ENCODE measurements at regions of chr14 and their contacts with region 1.

Region 1: GRCh38 chr14:91286530-91286937 is 42.0 kb upstream of the GPR68 start:
- DNase-seq: peak; percentile 62 to 82 (median 69)
- H3K4me3 ChIP-seq: no peak overlapping the region
- H3K4me3 Mint-ChIP-seq: no peak overlapping the region
- H3K27ac ChIP-seq: no peak overlapping the region
- H3K27ac Mint-ChIP-seq: peak overlapping the region; percentile 3 to 73 (median 54)
- H3K4me1 ChIP-seq: no peaks in the 10 kb centered on the region
- H3K4me1 Mint-ChIP-seq: peaks cover 8 to 12% (median 11%) of the 10 kb centered on the region in 3 donors
- H3K27me3 ChIP-seq: no peaks in the 10 kb centered on the region
- H3K27me3 Mint-ChIP-seq: peaks cover 0 to 2% of the 10 kb centered on the region in 2 donors

Region 2: GRCh38 chr14:91193069-91193468 is 93.5 kb before region 1 on chr14:
- CTCF ChIA-PET with region 1: interaction called, 10 read pairs
- POLR2A ChIA-PET with region 1: no interaction called
- DNase-seq: no peak
- H3K4me3 ChIP-seq: no peak overlapping the region
- H3K4me3 Mint-ChIP-seq: no peak overlapping the region
- H3K27ac ChIP-seq: no peak overlapping the region
- H3K27ac Mint-ChIP-seq: peak overlapping the region in 3 of 8 donors; percentile 3 to 13 (median 4)
- H3K4me1 ChIP-seq: peaks cover 14% of the 10 kb centered on the region
- H3K4me1 Mint-ChIP-seq: peaks cover 20 to 27% (median 23%) of the 10 kb centered on the region in 3 donors
- H3K27me3 ChIP-seq: no peaks in the 10 kb centered on the region
- H3K27me3 Mint-ChIP-seq: no peaks in the 10 kb centered on the region

Region 3: GRCh38 chr14:91228112-91229004 is 58.2 kb before region 1 on chr14:
- CTCF ChIA-PET with region 1: interaction called, 16 read pairs
- POLR2A ChIA-PET with region 1: no interaction called
- DNase-seq: peak; percentile 62 to 91 (median 78)
- H3K4me3 ChIP-seq: peak overlapping the region; percentile 29
- H3K4me3 Mint-ChIP-seq: peak overlapping the region; percentile 16 to 89 (median 85)
- H3K27ac ChIP-seq: peak overlapping the region; percentile 58
- H3K27ac Mint-ChIP-seq: peak overlapping the region; percentile 87 to 99 (median 98)
- H3K4me1 ChIP-seq: peaks cover 97% of the 10 kb centered on the region
- H3K4me1 Mint-ChIP-seq: peaks cover 86 to 100% (median 94%) of the 10 kb centered on the region in 3 donors
- H3K27me3 ChIP-seq: no peaks in the 10 kb centered on the region
- H3K27me3 Mint-ChIP-seq: peaks cover 0 to 1% of the 10 kb centered on the region in 2 donors

Region 4: GRCh38 chr14:91244501-91244901 is 42.0 kb before region 1 on chr14 and contains the start of gene GPR68:
- CTCF ChIA-PET with region 1: interaction called, 24 read pairs
- POLR2A ChIA-PET with region 1: interaction called, 4 read pairs
- DNase-seq: peak in 2 of 5 donors; percentile 29 to 62
- H3K4me3 ChIP-seq: peak within 1 kb of the TSS; percentile 82
- H3K4me3 Mint-ChIP-seq: peak within 1 kb of the TSS; percentile 87 to 95 (median 92)
- H3K27ac ChIP-seq: peak within 1 kb of the TSS; percentile 94
- H3K27ac Mint-ChIP-seq: peak within 1 kb of the TSS; percentile 85 to 100 (median 94)
- H3K4me1 ChIP-seq: peaks cover 80% of the 10 kb centered on the region
- H3K4me1 Mint-ChIP-seq: peaks cover 84 to 97% (median 95%) of the 10 kb centered on the region in 3 donors
- H3K27me3 ChIP-seq: no peaks in the 10 kb centered on the region
- H3K27me3 Mint-ChIP-seq: peaks cover 0 to 5% of the 10 kb centered on the region in 2 donors
- total RNA-seq, gene GPR68: 14.2 to 15.4 TPM

Region 5: GRCh38 chr14:91272341-91273272 is 13.9 kb before region 1 on chr14:
- CTCF ChIA-PET with region 1: interaction called, 12 read pairs
- POLR2A ChIA-PET with region 1: no interaction called
- DNase-seq: no peak
- H3K4me3 ChIP-seq: no peak overlapping the region
- H3K4me3 Mint-ChIP-seq: peak overlapping the region in 1 of 7 donors; percentile 56
- H3K27ac ChIP-seq: no peak overlapping the region
- H3K27ac Mint-ChIP-seq: peak overlapping the region in 4 of 8 donors; percentile 56 to 86 (median 74)
- H3K4me1 ChIP-seq: no peaks in the 10 kb centered on the region
- H3K4me1 Mint-ChIP-seq: peaks cover 11 to 17% (median 15%) of the 10 kb centered on the region in 3 donors
- H3K27me3 ChIP-seq: no peaks in the 10 kb centered on the region
- H3K27me3 Mint-ChIP-seq: peaks cover 0 to 7% of the 10 kb centered on the region in 2 donors

Region 6: DNA sequence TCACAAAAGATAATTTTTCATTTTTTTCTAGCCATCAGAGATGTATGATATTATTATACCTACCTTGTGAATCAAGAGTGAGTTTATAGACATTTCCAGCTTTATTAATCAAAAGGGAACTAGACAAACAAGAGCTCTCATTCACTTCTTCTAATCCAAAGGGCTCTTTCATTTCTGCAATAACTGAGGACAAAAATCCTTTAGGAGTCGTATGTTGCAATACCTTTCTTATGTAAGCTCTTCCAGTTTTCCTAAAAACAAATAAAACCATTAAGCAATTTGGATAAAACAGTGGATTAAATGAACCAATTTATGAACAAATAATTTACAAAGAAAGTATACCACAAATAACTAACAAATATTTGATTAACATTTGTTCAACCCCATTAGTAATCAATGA is 338.2 kb after region 1 on chr14:
- CTCF ChIA-PET with region 1: no interaction called
- POLR2A ChIA-PET with region 1: no interaction called
- DNase-seq: no peak
- H3K4me3 ChIP-seq: no peak overlapping the region
- H3K4me3 Mint-ChIP-seq: no peak overlapping the region
- H3K27ac ChIP-seq: no peak overlapping the region
- H3K27ac Mint-ChIP-seq: no peak overlapping the region
- H3K4me1 ChIP-seq: no peaks in the 10 kb centered on the region
- H3K4me1 Mint-ChIP-seq: no peaks in the 10 kb centered on the region
- H3K27me3 ChIP-seq: no peaks in the 10 kb centered on the region
- H3K27me3 Mint-ChIP-seq: peaks cover 5 to 10% of the 10 kb centered on the region in 2 donors

Measured in CD8-positive, alpha-beta memory T cell (primary cell).